Heart left ventricle (tissue), 16 donors: ENCODE measurements at regions of chr20 and their contacts with region 1.

Region 1: DNA sequence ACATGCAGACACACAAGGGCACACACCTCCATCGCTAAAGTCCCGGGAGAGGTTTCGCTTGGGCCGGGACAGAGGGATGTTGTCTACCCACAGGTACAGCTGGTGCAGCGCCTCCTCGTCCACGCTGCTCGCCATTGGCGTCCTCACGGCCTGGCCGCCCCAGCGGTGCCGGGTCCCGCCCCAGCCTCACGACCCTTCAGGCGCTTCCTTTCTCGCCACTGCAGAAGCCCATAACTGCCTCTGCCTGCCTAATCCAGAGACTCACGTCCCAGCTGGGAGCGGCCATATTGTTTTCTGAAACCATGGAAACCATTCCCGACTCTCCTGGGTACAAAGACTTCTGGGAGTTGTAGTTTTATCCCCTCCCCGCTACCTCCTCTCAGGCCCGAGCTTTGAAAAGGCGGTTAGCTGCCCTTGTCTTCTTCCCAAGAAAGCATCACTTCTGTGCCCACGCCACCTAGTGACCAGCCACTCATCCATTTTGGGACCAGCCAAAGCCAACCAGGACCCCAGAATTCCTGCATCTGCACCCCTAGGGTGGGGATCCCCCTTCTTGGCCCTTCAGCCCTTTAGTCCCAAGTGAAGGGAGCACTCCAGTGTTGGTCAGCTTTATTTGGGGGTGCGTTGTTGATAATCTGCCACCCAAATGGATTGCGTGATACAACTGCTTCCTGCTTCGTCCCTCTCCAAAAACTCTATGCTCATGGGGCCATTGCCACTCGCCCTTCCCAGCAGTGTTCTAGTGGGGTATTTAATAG is at the start of gene SPEF1:
- DNase-seq: peak; percentile 68 to 85 (median 81)
- ATAC-seq: peak; percentile 80 to 90 (median 84)
- H3K4me3 ChIP-seq: peak within 1 kb of the TSS in 11 of 12 donors; percentile 17 to 58 (median 46)
- H3K27ac ChIP-seq: peak within 1 kb of the TSS in 4 of 12 donors; percentile 7 to 52 (median 42)
- H3K4me1 ChIP-seq: peaks cover 4 to 55% (median 42%) of the 10 kb centered on the region in 12 donors
- H3K27me3 ChIP-seq: peaks cover 0 to 5% (median 0%) of the 10 kb centered on the region in 9 donors
- CTCF ChIP-seq: peak in 11 of 12 donors; percentile 21 to 54 (median 39)
- POLR2A ChIP-seq: no peak
- total RNA-seq, gene SPEF1: 0.18 to 0.65 (median 0.30) TPM in 4 of 9 donors, not detected in the others

Region 2: GRCh38 chr20:3461211-3461771 is 320.0 kb before region 1 on chr20:
- intact Hi-C with region 1: loop called in 1 of 10 experiments (anchors 10 kb)
- DNase-seq: no peak
- ATAC-seq: no peak
- H3K4me3 ChIP-seq: no peak overlapping the region
- H3K27ac ChIP-seq: peak overlapping the region in 1 of 12 donors; percentile 18
- H3K4me1 ChIP-seq: peaks cover 0 to 3% (median 0%) of the 10 kb centered on the region in 12 donors
- H3K27me3 ChIP-seq: no peaks in the 10 kb centered on the region
- CTCF ChIP-seq: no peak
- POLR2A ChIP-seq: no peak

Region 3: GRCh38 chr20:3652676-3653596 is 128.4 kb before region 1 on chr20:
- intact Hi-C with region 1: no loop called
- DNase-seq: no peak
- ATAC-seq: peak in 1 of 4 donors; percentile 35
- H3K4me3 ChIP-seq: no peak overlapping the region
- H3K27ac ChIP-seq: no peak overlapping the region
- H3K4me1 ChIP-seq: peaks cover 0 to 9% (median 0%) of the 10 kb centered on the region in 12 donors
- H3K27me3 ChIP-seq: no peaks in the 10 kb centered on the region
- CTCF ChIP-seq: no peak
- POLR2A ChIP-seq: no peak